GM23248 (cell line): ENCODE measurements at regions of chr7 and their contacts with region 1.

Region 1: DNA sequence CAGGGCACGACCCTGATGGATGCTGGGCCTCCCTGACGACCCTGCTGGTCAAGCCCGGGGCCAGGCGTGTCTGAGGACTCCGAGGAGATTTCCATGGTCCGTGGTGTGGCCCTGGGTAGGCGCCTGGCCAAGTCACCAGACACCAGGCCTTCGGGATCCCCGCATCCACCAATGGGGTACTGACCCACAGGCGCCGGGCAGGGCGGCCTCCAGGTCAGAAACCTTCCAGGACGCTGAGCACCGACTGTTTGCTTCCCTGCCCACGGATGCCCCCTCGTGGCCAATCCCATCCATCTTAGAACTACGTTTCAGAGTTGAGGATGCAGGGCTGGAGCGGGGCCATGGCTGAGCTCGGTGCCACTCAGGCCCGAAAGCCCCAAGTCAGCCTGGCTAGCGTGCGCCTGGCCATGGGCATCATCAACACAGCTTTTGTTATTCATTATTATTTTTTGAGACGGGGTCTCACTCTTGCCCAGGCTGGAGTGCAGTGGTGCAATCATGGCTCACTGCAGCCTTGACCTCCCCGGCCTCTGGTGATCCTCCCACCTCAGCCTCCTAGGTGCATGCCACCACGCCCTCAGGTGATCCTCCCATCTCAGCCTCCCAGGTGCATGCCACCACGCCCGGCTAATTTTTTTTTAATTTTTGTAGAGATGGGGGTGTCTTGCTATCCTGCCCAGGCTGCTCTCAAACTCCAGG is 7.1 kb upstream of the AMZ1 start:
- DNase-seq: peak; percentile 88
- H3K4me3 ChIP-seq: no peak overlapping the region
- H3K27ac ChIP-seq: no peak overlapping the region
- H3K4me1 ChIP-seq: no peaks in the 10 kb centered on the region
- H3K27me3 ChIP-seq: no peaks in the 10 kb centered on the region

Region 2: DNA sequence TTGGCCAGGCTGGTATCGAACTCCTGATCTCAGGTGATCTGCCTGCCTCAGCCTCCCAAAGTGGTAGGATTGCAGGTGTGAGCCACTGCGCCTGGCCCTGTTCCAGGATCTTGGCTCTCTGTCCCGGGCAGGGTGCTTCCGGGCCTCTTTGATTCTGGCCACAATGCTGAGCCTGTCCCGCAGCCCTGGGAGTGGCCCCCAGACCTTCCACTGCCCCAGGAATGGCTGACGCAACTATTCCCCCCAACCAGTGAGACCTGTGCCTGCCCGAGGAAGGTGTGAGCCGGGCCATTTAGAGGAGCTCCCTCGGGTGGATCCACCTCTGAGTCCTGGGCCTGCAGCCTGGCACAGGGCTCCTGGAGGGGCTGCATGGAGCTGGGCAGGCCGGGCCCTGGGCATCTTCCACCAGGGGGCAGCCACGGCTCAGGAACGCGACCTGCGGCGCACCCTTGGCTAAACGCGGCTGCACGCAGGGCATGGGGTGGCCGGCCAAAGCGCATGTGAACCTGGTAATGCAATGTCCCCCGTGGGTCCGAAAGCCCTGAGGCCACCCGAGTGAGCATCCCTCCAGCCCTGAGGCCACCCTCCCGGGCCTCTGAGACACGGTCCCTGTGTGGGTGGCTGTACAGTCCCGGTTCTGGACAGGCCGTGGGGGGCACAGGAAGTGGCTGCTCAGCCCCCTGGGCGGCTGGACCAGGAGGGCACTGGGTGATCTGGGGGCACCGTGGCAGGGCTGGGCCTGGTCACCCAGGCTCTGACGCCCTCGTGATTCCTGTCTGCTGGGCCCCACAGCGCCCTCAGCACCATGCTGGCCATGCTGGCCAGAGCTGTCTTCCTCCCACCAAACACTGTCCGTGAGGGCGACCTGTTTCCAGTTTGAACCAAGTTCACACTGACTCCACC is 229.5 kb before region 1 on chr7:
- in situ Hi-C with region 1: loop called (anchors 25 kb)
- DNase-seq: peak; percentile 86
- H3K4me3 ChIP-seq: peak overlapping the region; percentile 58
- H3K27ac ChIP-seq: no peak overlapping the region
- H3K4me1 ChIP-seq: no peaks in the 10 kb centered on the region; the same call in 1 of the 2 replicates
- H3K27me3 ChIP-seq: no peaks in the 10 kb centered on the region